ENCODE measurements at regions of chr2 and their contacts with region 1.

Region 1: GRCh38 chr2:181374781-181375675 is 82.2 kb upstream of the ITGA4 start:
- DNase-seq: peak; percentile 42
- ATAC-seq: peak; percentile 87
- H3K4me3 ChIP-seq: peak overlapping the region; percentile 4; the same call in 1 of the 2 replicates
- H3K27ac ChIP-seq: peak overlapping the region; percentile 38; the same call in 1 of the 2 replicates
- H3K4me1 ChIP-seq: peaks cover 29% of the 10 kb centered on the region
- H3K27me3 ChIP-seq: no peaks in the 10 kb centered on the region
- CTCF ChIP-seq: no peak
- EP300 ChIP-seq: no peak
- POLR2A ChIP-seq: no peak
- RAD21 ChIP-seq: no peak

Region 2: GRCh38 chr2:181077128-181077709 is 297.8 kb before region 1 on chr2:
- CTCF ChIA-PET with region 1: no interaction called
- POLR2A ChIA-PET with region 1: no interaction called
- RAD21 ChIA-PET with region 1: no interaction called
- SMC1A ChIA-PET with region 1: no interaction called
- in situ Hi-C with region 1: no loop called
- intact Hi-C with region 1: no loop called
- DNase-seq: peak; percentile 16
- ATAC-seq: peak; percentile 94
- H3K4me3 ChIP-seq: no peak overlapping the region
- H3K27ac ChIP-seq: no peak overlapping the region
- H3K4me1 ChIP-seq: no peaks in the 10 kb centered on the region
- H3K27me3 ChIP-seq: no peaks in the 10 kb centered on the region
- CTCF ChIP-seq: peak; percentile 60 to 71 (median 65)
- EP300 ChIP-seq: no peak
- POLR2A ChIP-seq: no peak
- RAD21 ChIP-seq: peak; percentile 93

Region 3: GRCh38 chr2:181348107-181348837 is 26.8 kb before region 1 on chr2:
- CTCF ChIA-PET with region 1: interaction called, 3 read pairs
- POLR2A ChIA-PET with region 1: interaction called, 3 read pairs
- RAD21 ChIA-PET with region 1: interaction called, 5 read pairs
- SMC1A ChIA-PET with region 1: interaction called, 13 read pairs
- in situ Hi-C with region 1: no loop called
- intact Hi-C with region 1: no loop called
- DNase-seq: peak; percentile 66
- ATAC-seq: peak; percentile 96
- H3K4me3 ChIP-seq: no peak overlapping the region
- H3K27ac ChIP-seq: peak overlapping the region; percentile 68
- H3K4me1 ChIP-seq: peaks cover 12% of the 10 kb centered on the region; the same call in 1 of the 2 replicates
- H3K27me3 ChIP-seq: no peaks in the 10 kb centered on the region
- CTCF ChIP-seq: no peak
- EP300 ChIP-seq: peak; percentile 50 to 54; a peak in 1 of 4 replicates
- POLR2A ChIP-seq: no peak
- RAD21 ChIP-seq: no peak